ENCODE measurements at regions of chr15 and their contacts with region 1.

Region 1: DNA sequence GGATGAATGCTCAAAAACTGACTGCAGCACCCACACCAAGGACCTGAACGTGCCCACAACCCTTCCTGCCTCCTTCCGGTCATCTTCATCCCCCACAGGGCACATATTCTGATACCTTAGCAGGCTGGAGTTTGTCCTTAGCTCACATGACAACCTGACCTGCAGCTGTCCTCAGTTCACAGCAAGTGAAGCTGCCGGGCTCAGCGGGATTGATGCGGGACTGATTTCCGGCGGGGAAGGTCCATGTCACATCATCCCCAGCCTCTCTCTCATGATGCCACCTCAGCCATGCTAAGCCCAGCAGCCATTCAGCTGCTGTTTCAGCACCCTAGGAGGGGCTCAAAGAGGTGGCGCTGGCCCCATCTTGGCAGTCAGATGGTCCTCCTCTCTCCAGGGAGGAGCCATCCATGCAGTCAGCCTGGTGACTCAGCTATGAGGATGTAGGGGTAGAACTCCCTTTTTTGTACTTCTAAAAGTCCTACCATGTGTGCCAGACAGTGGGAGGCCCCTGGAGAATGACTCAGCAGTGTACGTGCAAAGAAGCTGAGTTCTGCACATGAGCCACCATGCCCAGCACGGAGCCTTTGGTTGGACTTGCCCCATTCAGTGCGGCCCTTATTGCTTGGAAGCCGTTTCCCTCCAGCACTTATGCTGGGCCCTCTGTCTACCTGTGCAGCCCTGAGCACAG is 9.5 kb downstream of the CA12 start:
- DNase-seq: peak; percentile 97
- H3K4me3 ChIP-seq: no peak overlapping the region
- H3K27ac ChIP-seq: peak overlapping the region; percentile 73
- H3K4me1 ChIP-seq: peaks cover 70% of the 10 kb centered on the region
- H3K27me3 ChIP-seq: no peaks in the 10 kb centered on the region
- CTCF ChIP-seq: no peak

Region 2: DNA sequence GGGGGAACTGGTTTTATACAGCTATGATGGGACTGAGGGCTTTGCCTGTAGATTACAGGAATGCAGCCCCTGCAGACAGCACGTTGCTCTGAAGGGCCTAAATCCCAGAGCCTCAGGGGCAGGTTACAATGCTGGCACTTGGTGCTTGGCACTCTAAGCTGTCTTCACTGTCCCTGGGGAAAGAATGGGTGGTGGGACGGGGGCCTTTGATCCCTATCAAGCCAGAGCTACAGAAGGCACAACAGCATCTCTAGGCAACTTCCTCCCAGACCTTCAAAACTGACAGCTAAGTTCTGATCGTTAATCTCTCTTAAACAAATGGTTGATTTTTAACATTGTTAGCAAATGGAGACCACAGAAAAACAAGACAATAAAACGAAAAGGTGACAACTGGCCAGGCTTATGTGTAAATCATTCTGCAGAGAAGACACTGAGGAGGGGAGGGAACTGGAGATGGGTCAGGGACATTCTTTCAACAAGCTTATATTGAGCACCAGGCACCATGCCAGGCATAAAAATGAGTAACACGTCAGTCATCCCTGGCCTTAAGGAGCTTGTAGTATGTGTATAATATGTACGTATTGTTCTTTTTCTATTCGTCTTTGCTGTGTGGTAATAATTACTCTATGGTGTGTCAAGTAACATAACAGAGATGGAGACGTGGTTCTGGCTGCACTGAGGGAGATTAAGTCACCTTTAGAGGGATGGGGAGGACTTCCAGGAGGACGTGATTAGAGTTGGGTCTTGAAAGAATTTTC is 39.6 kb before region 1 on chr15:
- CTCF ChIA-PET with region 1: no interaction called
- dilution Hi-C with region 1: no loop called
- in situ Hi-C with region 1: no loop called
- intact Hi-C with region 1: loop called (anchors 1 kb)
- DNase-seq: peak; percentile 94
- H3K4me3 ChIP-seq: no peak overlapping the region
- H3K27ac ChIP-seq: peak overlapping the region; percentile 9
- H3K4me1 ChIP-seq: peaks cover 34% of the 10 kb centered on the region
- H3K27me3 ChIP-seq: no peaks in the 10 kb centered on the region
- CTCF ChIP-seq: no peak

Region 3: GRCh38 chr15:63402498-63403253 is 30.5 kb after region 1 on chr15:
- CTCF ChIA-PET with region 1: no interaction called
- dilution Hi-C with region 1: no loop called
- in situ Hi-C with region 1: no loop called
- intact Hi-C with region 1: no loop called
- DNase-seq: peak; percentile 24
- H3K4me3 ChIP-seq: no peak overlapping the region
- H3K27ac ChIP-seq: no peak overlapping the region
- H3K4me1 ChIP-seq: peaks cover 10% of the 10 kb centered on the region
- H3K27me3 ChIP-seq: no peaks in the 10 kb centered on the region
- CTCF ChIP-seq: peak; percentile 60 to 62